ENCODE measurements at regions of chr11 and their contacts with region 1.

Region 1: GRCh38 chr11:2151500-2152257 is 9.3 kb downstream of the INS start:
- DNase-seq: peak; percentile 89
- ATAC-seq: peak; percentile 71
- H3K4me3 Mint-ChIP-seq: peak overlapping the region; percentile 4
- H3K27ac Mint-ChIP-seq: no peak overlapping the region
- H3K4me1 Mint-ChIP-seq: peaks cover 7% of the 10 kb centered on the region
- H3K27me3 Mint-ChIP-seq: peaks cover 33% of the 10 kb centered on the region

Region 2: DNA sequence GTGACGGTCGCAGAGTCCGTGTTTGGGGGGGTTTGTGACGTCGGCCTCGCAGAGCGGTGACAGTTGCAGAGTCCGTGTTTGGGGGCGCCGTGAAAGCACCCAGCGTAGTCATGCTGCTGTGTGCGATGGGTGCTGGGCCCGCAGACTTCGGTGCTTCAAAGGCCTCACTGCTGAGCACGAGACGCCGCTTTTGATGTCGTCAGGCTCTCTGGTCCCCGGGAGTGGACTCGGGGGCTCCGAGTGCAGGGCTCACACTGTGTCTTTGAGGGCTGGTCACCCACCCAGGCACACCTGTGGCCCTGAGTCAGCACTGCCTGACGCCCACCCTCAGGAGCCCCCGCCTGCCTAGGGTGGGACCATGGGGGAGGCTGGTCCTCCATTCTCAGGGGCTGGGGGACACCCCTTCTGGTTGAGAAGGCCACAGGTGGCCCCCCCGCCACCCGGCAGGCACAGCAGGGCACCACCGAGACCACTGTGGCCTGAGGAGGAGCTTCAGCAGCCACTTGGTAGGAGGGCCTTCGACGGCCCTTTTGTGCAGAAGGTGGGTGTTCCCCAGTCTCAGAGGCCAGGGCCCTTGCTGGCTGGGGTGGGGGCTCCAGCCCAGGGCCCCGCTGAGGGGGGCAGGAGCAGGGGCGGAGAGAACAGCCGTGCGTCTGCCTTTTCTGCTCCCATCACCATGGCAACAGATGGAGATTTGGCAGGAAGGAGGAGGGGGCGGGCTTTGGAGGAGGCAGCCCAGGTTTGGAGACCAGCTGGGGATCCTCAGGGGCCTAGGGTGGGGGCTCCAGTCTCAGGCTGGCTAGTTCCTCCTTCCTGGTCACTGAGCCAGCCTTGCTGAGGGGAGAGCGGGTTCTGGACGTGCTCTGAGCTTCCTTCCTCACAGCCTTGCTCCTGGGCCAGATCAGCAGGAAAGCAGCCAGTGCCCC is 741.0 kb before region 1 on chr11:
- CTCF ChIA-PET with region 1: no interaction called
- POLR2A ChIA-PET with region 1: no interaction called
- intact Hi-C with region 1: no loop called
- DNase-seq: no peak
- ATAC-seq: no peak
- H3K4me3 Mint-ChIP-seq: no peak overlapping the region
- H3K27ac Mint-ChIP-seq: no peak overlapping the region
- H3K4me1 Mint-ChIP-seq: no peaks in the 10 kb centered on the region
- H3K27me3 Mint-ChIP-seq: no peaks in the 10 kb centered on the region

Region 3: DNA sequence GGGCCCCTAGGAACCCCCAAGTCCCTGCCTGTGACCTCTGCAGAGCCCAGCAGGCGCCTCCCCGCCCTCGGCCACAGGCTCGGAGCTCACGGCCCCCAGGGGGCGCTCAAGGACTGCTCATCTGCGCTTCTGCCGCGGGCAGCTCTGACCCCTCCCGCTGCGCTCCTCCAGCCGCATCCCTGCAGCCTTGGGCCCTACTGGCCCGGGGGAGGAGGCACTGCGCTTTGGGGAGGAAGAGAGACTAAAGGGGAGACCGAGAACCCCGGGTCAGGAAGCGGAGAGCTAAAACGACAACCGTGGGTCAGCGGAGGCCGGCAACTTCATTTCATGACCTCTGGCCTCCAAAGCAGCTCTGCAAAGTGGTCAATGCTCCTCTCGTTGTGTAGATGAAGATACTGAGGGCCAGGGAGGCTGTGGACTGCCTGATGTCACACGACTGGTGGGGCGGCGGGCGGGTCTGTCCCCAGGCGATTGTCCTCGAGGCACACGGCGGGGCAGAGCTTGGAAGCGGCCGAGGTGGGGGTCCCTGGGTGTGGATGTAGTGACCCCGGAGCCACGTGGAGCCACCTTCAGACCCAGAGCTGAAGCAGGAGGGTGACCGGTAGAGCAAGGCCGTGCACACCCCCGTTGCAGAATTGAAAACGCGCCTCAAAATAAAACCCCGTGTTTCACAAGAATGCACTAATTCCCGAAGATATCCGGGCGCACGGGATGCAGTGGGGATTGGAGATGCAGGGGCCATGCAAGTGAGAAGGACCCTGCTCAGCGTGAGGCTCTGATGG is 457.4 kb before region 1 on chr11:
- CTCF ChIA-PET with region 1: interaction called, 28 read pairs
- POLR2A ChIA-PET with region 1: no interaction called
- intact Hi-C with region 1: loop called (anchors 1 to 5 kb)
- DNase-seq: peak; percentile 91
- ATAC-seq: peak; percentile 91
- H3K4me3 Mint-ChIP-seq: no peak overlapping the region
- H3K27ac Mint-ChIP-seq: no peak overlapping the region
- H3K4me1 Mint-ChIP-seq: peaks cover 5% of the 10 kb centered on the region
- H3K27me3 Mint-ChIP-seq: peaks cover 14% of the 10 kb centered on the region

Region 4: DNA sequence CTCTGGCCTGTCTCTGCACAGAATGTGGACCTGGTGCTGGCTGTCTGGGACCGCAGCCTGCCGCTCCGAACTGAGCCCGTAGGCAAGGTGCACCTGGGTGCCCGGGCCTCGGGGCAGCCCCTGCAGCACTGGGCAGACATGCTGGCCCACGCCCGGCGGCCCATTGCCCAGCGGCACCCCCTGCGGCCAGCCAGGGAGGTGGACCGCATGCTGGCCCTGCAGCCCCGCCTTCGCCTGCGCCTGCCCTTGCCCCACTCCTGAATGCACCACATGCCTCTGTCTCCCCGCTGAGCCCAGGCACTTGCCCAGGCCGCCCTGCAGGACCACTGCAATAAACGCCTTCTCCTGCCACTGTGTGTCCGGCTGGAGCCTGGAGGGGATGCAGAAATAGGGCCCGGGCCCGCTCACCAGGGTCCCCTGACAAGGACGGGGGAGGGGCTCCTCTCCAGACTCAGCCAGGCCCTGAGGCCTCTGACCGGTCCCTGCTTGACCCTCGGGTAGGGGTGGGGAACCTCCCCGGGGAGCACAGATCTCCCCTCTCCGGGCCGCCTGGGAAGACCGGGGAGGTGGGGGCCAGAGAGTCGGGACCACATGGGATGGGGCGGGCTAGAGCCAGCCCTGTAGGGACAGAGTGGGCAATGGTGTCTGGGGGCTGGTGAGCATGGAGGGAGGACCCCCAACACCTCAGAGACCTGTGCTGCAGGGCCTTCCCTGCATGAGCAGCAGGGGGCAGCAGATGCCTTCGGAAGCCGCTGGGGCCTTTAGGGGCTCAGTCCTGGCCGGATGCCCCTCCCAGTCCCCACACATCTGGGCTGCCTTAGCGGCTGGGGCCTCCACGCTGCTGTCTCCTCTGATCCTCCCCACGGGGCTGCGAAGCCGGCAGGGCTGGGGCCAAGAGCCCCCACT is 314.3 kb before region 1 on chr11:
- CTCF ChIA-PET with region 1: interaction called, 33 read pairs
- POLR2A ChIA-PET with region 1: no interaction called
- intact Hi-C with region 1: loop called (anchors 1 to 2 kb)
- DNase-seq: peak; percentile 89
- ATAC-seq: peak; percentile 91
- H3K4me3 Mint-ChIP-seq: no peak overlapping the region
- H3K27ac Mint-ChIP-seq: no peak overlapping the region
- H3K4me1 Mint-ChIP-seq: no peaks in the 10 kb centered on the region
- H3K27me3 Mint-ChIP-seq: no peaks in the 10 kb centered on the region

Region 5: GRCh38 chr11:1917671-1918516 is 233.8 kb before region 1 on chr11:
- CTCF ChIA-PET with region 1: no interaction called
- POLR2A ChIA-PET with region 1: no interaction called
- intact Hi-C with region 1: loop called in 1 of 2 experiments (anchors 5 kb)
- DNase-seq: no peak
- ATAC-seq: peak; percentile 33
- H3K4me3 Mint-ChIP-seq: no peak overlapping the region
- H3K27ac Mint-ChIP-seq: no peak overlapping the region
- H3K4me1 Mint-ChIP-seq: peaks cover 7% of the 10 kb centered on the region
- H3K27me3 Mint-ChIP-seq: peaks cover 12% of the 10 kb centered on the region

Region 6: GRCh38 chr11:2002807-2003206 is 148.9 kb before region 1 on chr11:
- CTCF ChIA-PET with region 1: interaction called, 12 read pairs
- POLR2A ChIA-PET with region 1: no interaction called
- intact Hi-C with region 1: no loop called
- DNase-seq: no peak
- ATAC-seq: peak; percentile 63
- H3K4me3 Mint-ChIP-seq: no peak overlapping the region
- H3K27ac Mint-ChIP-seq: no peak overlapping the region
- H3K4me1 Mint-ChIP-seq: no peaks in the 10 kb centered on the region
- H3K27me3 Mint-ChIP-seq: no peaks in the 10 kb centered on the region

Region 7: DNA sequence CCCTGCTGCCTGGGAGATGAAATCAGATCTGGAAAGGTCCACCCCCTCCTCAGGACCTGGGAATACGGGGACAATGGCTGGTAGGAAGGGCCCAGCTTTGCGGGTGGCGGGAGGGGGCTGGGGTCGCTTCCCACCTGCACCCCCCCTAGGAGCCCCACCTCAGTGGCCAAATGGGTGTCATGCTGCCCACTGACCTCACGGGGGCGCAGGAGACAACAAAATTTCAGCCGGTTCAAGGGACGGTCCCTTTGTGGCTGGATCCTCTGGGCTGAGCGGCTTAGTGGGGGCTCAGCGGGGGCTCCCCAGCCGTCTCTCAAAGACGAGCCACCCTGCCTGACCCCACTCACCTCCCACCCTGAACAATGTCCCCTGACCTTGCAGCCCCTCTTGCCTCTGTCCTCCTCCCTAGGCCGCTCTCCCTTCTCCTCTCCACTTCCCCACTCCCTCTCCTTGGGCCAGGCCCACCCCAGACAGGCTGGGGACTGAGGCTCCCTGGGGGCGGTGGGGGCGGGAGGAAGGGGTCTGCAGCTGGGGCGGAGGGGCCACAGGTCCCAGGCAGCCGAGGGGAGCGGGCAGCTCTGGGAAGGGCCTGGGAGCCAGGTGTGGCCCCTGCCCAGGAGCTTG is 114.7 kb before region 1 on chr11:
- CTCF ChIA-PET with region 1: interaction called, 311 read pairs
- POLR2A ChIA-PET with region 1: interaction called, 5 read pairs
- intact Hi-C with region 1: no loop called
- DNase-seq: no peak
- ATAC-seq: peak; percentile 75
- H3K4me3 Mint-ChIP-seq: no peak overlapping the region
- H3K27ac Mint-ChIP-seq: no peak overlapping the region
- H3K4me1 Mint-ChIP-seq: no peaks in the 10 kb centered on the region
- H3K27me3 Mint-ChIP-seq: no peaks in the 10 kb centered on the region

Region 8: DNA sequence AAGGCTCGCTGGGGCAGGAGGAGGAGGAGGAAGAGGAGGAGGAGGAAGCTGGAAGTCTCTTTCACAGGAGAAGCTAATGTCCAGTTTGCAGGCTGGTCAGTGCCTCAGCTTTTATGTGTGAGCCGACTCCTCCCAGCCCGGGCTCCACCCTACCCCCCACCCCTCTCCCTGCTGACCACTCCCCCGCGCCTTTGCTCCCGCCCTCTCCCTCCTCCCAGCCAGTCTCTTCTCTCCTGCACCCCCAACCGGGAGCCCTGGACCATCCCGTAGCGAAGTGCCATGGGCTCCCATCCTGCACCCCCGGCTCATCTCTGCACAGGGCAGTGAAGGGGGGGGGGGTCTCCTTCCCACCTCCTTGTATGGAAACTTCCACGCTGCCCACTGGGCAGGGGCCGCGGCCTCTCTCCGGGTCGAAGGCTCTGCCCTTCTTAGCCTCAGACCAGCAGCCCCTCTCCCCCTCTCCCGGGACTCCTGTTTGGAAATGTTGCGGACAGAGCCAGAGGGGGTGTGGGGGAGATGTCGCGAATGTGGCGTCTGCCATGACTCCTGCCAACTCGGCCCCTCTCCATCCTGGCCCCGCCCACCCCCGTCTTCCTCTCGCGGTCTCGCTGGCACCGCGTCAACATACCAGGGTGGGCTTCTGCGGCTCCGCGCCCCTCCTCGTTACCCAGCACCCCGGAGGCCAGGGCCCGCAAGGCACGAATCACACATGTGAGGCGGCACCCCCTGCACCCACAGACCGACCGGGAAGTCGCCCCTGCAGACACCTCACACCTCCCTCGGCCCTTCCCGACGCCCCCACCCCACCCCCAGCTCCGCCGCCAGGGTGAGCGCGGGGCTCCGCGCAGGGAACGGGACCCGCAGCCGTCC is 14.2 kb before region 1 on chr11:
- CTCF ChIA-PET with region 1: interaction called, 15 read pairs
- POLR2A ChIA-PET with region 1: interaction called, 4 read pairs
- intact Hi-C with region 1: no loop called
- DNase-seq: no peak
- ATAC-seq: no peak
- H3K4me3 Mint-ChIP-seq: no peak overlapping the region
- H3K27ac Mint-ChIP-seq: no peak overlapping the region
- H3K4me1 Mint-ChIP-seq: peaks cover 17% of the 10 kb centered on the region
- H3K27me3 Mint-ChIP-seq: peaks cover 54% of the 10 kb centered on the region

Region 9: GRCh38 chr11:2342981-2343380 is 191.3 kb after region 1 on chr11:
- CTCF ChIA-PET with region 1: no interaction called
- POLR2A ChIA-PET with region 1: no interaction called
- intact Hi-C with region 1: no loop called
- DNase-seq: no peak
- ATAC-seq: no peak
- H3K4me3 Mint-ChIP-seq: no peak overlapping the region
- H3K27ac Mint-ChIP-seq: no peak overlapping the region
- H3K4me1 Mint-ChIP-seq: no peaks in the 10 kb centered on the region
- H3K27me3 Mint-ChIP-seq: peaks cover 4% of the 10 kb centered on the region